Naive thymus-derived CD4-positive, alpha-beta T cell (primary cell): ENCODE measurements at regions of chr21 and their contacts with region 1.

Region 1: GRCh38 chr21:33641336-33642026 is at the start of gene CRYZL1:
- DNase-seq: peak; percentile 96 to 100 (median 100)
- ATAC-seq: peak; percentile 89
- H3K4me3 ChIP-seq: peak within 1 kb of the TSS; percentile 97
- H3K4me3 Mint-ChIP-seq: peak within 1 kb of the TSS; percentile 83 to 99 (median 93)
- H3K27ac ChIP-seq: peak within 1 kb of the TSS; percentile 75
- H3K27ac Mint-ChIP-seq: peak within 1 kb of the TSS; percentile 85 to 100 (median 94)
- H3K4me1 ChIP-seq: peaks cover 4 to 7% of the 10 kb centered on the region in 2 donors
- H3K4me1 Mint-ChIP-seq: peaks cover 19 to 50% (median 37%) of the 10 kb centered on the region in 7 donors
- H3K27me3 ChIP-seq: no peaks in the 10 kb centered on the region
- H3K27me3 Mint-ChIP-seq: peaks cover 9 to 29% (median 15%) of the 10 kb centered on the region in 5 donors
- total RNA-seq, gene CRYZL1: 34.6 to 75.5 (median 40.4) TPM

Region 2: DNA sequence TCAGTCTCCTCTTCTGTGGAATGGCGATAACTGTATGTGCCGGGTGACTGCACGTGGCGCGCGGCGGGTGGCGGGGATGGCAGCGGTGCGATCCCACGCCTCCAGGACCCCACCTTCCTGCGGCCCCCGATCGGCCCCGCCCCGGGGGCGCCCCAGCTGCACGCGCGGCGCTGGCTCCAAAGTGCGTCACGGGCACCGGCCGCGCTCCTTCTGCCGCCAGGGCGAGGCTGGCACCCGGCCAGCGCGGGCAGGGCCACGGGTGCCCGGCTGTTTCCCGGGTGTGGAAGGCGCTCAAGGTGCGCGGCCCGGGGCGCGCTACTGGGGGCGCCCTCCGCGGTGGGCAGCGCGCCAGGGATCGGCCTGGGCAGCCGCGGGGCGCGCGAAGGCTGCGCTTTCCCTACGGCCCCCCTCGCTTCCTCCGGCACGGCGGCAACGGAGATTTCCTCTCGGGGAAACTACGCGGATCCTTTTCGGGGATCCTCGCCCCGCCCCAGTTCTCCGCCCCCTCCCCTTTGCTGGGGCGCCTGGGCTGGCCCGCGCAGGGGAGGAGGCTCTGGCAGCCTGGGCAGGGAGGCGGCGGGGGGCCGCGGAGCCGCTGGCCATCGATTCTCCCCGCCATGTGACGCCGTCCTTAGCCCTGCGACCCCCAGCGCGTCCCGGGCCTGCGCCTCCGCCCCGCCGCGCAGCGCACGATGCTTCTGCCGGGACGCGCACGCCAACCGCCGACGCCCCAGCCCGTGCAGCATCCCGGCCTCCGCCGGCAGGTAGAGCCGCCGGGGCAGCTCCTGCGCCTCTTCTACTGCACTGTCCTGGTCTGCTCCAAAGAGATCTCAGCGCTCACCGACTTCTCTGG is 1229.1 kb before region 1 on chr21 and contains the start of gene EVA1C:
- CTCF ChIA-PET with region 1: no interaction called
- POLR2A ChIA-PET with region 1: no interaction called
- intact Hi-C with region 1: loop called in 1 of 2 experiments (anchors 5 kb)
- DNase-seq: peak; percentile 56 to 73 (median 70)
- ATAC-seq: peak; percentile 81
- H3K4me3 ChIP-seq: peak within 1 kb of the TSS; percentile 76
- H3K4me3 Mint-ChIP-seq: peak within 1 kb of the TSS; percentile 88 to 97 (median 94)
- H3K27ac ChIP-seq: peak within 1 kb of the TSS; percentile 85
- H3K27ac Mint-ChIP-seq: peak within 1 kb of the TSS; percentile 89 to 95 (median 93)
- H3K4me1 ChIP-seq: peaks cover 14 to 29% of the 10 kb centered on the region in 2 donors
- H3K4me1 Mint-ChIP-seq: peaks cover 22 to 57% (median 28%) of the 10 kb centered on the region in 7 donors
- H3K27me3 ChIP-seq: no peaks in the 10 kb centered on the region
- H3K27me3 Mint-ChIP-seq: peaks cover 0 to 7% (median 0%) of the 10 kb centered on the region in 5 donors
- total RNA-seq, gene EVA1C: 2.6 to 16.3 (median 12.3) TPM

Region 3: GRCh38 chr21:33157303-33157702 is 484.2 kb before region 1 on chr21:
- CTCF ChIA-PET with region 1: no interaction called
- POLR2A ChIA-PET with region 1: no interaction called
- intact Hi-C with region 1: no loop called
- DNase-seq: no peak
- ATAC-seq: no peak
- H3K4me3 ChIP-seq: no peak overlapping the region
- H3K4me3 Mint-ChIP-seq: no peak overlapping the region
- H3K27ac ChIP-seq: no peak overlapping the region
- H3K27ac Mint-ChIP-seq: no peak overlapping the region
- H3K4me1 ChIP-seq: no peaks in the 10 kb centered on the region
- H3K4me1 Mint-ChIP-seq: peaks cover 0 to 4% (median 1%) of the 10 kb centered on the region in 7 donors
- H3K27me3 ChIP-seq: no peaks in the 10 kb centered on the region
- H3K27me3 Mint-ChIP-seq: peaks cover 9 to 63% (median 25%) of the 10 kb centered on the region in 5 donors

Region 4: DNA sequence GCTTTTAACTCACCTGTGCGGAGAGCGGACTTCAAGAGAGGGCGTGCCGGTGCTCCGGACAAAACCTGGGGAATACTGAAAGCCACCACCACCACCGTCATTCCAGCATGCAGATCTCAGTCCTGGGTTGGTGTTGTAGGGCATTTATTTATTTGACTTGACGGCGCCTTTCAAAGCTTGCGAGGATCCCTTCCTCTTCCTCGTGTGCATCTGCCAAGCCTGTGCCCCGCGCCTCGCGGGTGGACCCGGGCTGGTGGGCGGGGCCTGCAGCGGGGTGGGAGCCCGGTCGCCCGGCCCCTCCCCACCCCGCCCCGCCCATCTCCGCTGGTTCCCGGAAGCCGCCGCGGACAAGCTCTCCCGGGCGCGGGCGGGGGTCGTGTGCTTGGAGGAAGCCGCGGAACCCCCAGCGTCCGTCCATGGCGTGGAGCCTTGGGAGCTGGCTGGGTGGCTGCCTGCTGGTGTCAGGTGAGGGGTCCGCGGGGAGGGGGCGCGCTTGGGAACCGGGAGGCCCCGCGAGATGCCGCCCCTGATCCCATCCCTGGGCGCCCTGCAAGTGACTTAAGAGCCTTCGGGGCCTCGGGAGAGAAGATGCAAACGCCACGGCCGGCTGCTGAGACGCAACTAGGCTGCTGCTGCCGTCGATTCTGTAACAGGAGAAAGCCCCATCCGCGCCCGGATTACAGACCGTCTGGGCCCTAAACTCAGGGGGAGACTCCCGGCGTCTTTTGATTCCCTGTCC is 375.3 kb before region 1 on chr21 and contains the start of gene IL10RB:
- CTCF ChIA-PET with region 1: no interaction called
- POLR2A ChIA-PET with region 1: no interaction called
- intact Hi-C with region 1: loop called in 1 of 2 experiments (anchors 1 kb)
- DNase-seq: peak; percentile 53 to 80 (median 62)
- ATAC-seq: peak; percentile 88
- H3K4me3 ChIP-seq: peak within 1 kb of the TSS; percentile 87
- H3K4me3 Mint-ChIP-seq: peak within 1 kb of the TSS; percentile 86 to 99 (median 96)
- H3K27ac ChIP-seq: peak within 1 kb of the TSS; percentile 83
- H3K27ac Mint-ChIP-seq: peak within 1 kb of the TSS; percentile 91 to 97 (median 94)
- H3K4me1 ChIP-seq: peaks cover 23 to 38% of the 10 kb centered on the region in 2 donors
- H3K4me1 Mint-ChIP-seq: peaks cover 45 to 78% (median 57%) of the 10 kb centered on the region in 7 donors
- H3K27me3 ChIP-seq: no peaks in the 10 kb centered on the region
- H3K27me3 Mint-ChIP-seq: no peaks in the 10 kb centered on the region
- total RNA-seq, gene IL10RB: 17.6 to 35.0 (median 27.2) TPM

Region 5: DNA sequence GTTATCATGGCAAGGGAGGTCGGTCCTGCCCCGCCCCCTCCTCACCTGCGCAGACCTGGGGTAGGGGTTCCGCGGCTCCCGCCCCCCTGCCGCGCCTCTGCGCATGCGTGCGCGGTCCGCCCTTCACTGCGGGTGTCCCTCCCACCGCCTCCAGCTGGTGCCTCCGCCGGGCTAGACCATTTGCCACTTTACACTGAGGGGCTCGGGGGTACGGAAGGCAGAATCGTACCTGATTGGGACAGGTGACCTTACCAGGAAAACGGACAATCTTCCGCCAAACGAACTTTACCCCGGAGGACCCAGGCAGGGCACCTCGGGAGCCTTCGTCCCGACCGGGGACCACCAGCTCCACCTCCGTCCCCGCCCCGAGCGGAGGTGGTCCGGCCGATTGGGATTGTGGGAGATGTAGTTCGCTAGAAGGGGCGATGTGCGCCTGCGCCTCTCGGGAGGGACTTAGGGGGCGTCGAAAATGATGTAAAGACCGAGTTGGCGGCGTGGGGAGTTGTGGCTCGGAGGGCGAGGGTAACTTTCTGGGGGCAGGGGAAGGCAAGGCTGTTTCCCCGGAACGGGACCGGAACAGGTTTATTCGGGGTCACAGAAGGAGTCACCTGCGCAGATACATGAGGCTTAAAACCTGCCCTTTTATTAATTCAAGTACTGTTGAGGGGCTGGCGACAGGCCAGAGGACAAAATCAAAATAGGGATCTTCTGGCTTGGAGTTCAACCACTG is 149.9 kb before region 1 on chr21 and contains the start of gene DNAJC28:
- CTCF ChIA-PET with region 1: no interaction called
- POLR2A ChIA-PET with region 1: no interaction called
- intact Hi-C with region 1: loop called (anchors 1 kb)
- DNase-seq: peak; percentile 91 to 96 (median 95)
- ATAC-seq: peak; percentile 99
- H3K4me3 ChIP-seq: peak within 1 kb of the TSS; percentile 93
- H3K4me3 Mint-ChIP-seq: peak within 1 kb of the TSS; percentile 86 to 97 (median 92)
- H3K27ac ChIP-seq: peak within 1 kb of the TSS; percentile 74
- H3K27ac Mint-ChIP-seq: peak within 1 kb of the TSS; percentile 73 to 97 (median 92)
- H3K4me1 ChIP-seq: peaks cover 0 to 5% of the 10 kb centered on the region in 2 donors
- H3K4me1 Mint-ChIP-seq: peaks cover 5 to 14% (median 12%) of the 10 kb centered on the region in 7 donors
- H3K27me3 ChIP-seq: no peaks in the 10 kb centered on the region
- H3K27me3 Mint-ChIP-seq: peaks cover 0 to 15% (median 0%) of the 10 kb centered on the region in 5 donors
- total RNA-seq, gene DNAJC28: 0.27 to 1.5 (median 0.61) TPM in 4 of 5 experiments, not detected in the other

Region 6: GRCh38 chr21:33915368-33916199 is 274.1 kb after region 1 on chr21 and contains the start of gene ATP5PO:
- CTCF ChIA-PET with region 1: no interaction called
- POLR2A ChIA-PET with region 1: no interaction called
- intact Hi-C with region 1: loop called (anchors 1 kb)
- DNase-seq: peak; percentile 87 to 96 (median 93)
- ATAC-seq: peak; percentile 100
- H3K4me3 ChIP-seq: peak within 1 kb of the TSS; percentile 92
- H3K4me3 Mint-ChIP-seq: peak within 1 kb of the TSS; percentile 93 to 99 (median 98)
- H3K27ac ChIP-seq: peak within 1 kb of the TSS; percentile 92
- H3K27ac Mint-ChIP-seq: peak within 1 kb of the TSS; percentile 87 to 98 (median 97)
- H3K4me1 ChIP-seq: peaks cover 11 to 12% of the 10 kb centered on the region in 2 donors
- H3K4me1 Mint-ChIP-seq: peaks cover 14 to 40% (median 35%) of the 10 kb centered on the region in 7 donors
- H3K27me3 ChIP-seq: no peaks in the 10 kb centered on the region
- H3K27me3 Mint-ChIP-seq: no peaks in the 10 kb centered on the region
- total RNA-seq, gene ATP5PO: 123 to 185 (median 157) TPM

Region 7: GRCh38 chr21:34614633-34615486 is 973.4 kb after region 1 on chr21 and contains the start of gene RCAN1:
- CTCF ChIA-PET with region 1: no interaction called
- POLR2A ChIA-PET with region 1: no interaction called
- intact Hi-C with region 1: loop called in 1 of 2 experiments (anchors 1 kb)
- DNase-seq: peak; percentile 70 to 87 (median 85)
- ATAC-seq: peak; percentile 99
- H3K4me3 ChIP-seq: peak within 1 kb of the TSS; percentile 67
- H3K4me3 Mint-ChIP-seq: peak within 1 kb of the TSS; percentile 83 to 96 (median 93)
- H3K27ac ChIP-seq: peak within 1 kb of the TSS; percentile 57
- H3K27ac Mint-ChIP-seq: peak within 1 kb of the TSS; percentile 82 to 95 (median 83)
- H3K4me1 ChIP-seq: peaks cover 4 to 12% of the 10 kb centered on the region in 2 donors
- H3K4me1 Mint-ChIP-seq: peaks cover 15 to 25% (median 20%) of the 10 kb centered on the region in 7 donors
- H3K27me3 ChIP-seq: no peaks in the 10 kb centered on the region
- H3K27me3 Mint-ChIP-seq: peaks cover 0 to 32% (median 0%) of the 10 kb centered on the region in 5 donors
- total RNA-seq, gene RCAN1: 3.0 to 8.1 (median 4.9) TPM